ENCODE measurements at regions of chrX and their contacts with region 1.

Region 1: DNA sequence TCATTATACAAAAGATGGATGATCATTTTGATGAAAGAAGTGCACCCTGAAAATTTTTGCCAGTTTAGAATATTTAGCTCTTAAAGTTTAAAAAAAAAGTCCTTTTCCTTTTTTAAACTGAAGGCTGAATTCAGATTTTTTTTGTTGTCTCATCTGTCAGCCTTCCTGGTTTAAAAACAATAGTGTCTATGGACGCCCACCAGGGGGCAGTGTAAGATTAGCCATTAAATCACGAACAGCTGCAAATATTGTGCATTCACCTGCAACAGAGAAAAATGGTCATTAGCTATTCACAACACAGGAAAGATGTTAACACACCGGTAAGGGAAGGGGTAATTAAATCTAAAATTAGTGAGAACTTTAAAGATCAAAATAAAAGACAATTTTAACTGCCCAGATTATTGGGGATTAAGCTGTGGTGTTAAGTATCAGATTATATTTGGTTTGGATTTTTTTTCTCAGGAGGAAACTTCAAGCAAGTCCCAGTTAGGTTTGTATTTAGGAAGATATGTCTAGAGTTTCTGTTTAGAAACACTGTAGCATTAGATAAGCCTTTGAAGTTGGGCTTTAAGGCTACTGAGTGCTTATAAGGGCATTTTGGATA is 4.4 kb upstream of the CXorf38 start:
- H3K4me3 ChIP-seq: no peak overlapping the region
- H3K27ac ChIP-seq: no peak overlapping the region
- H3K4me1 ChIP-seq: peaks cover 4% of the 10 kb centered on the region; the same call in 1 of the 2 replicates
- CTCF ChIP-seq: no peak

Region 2: DNA sequence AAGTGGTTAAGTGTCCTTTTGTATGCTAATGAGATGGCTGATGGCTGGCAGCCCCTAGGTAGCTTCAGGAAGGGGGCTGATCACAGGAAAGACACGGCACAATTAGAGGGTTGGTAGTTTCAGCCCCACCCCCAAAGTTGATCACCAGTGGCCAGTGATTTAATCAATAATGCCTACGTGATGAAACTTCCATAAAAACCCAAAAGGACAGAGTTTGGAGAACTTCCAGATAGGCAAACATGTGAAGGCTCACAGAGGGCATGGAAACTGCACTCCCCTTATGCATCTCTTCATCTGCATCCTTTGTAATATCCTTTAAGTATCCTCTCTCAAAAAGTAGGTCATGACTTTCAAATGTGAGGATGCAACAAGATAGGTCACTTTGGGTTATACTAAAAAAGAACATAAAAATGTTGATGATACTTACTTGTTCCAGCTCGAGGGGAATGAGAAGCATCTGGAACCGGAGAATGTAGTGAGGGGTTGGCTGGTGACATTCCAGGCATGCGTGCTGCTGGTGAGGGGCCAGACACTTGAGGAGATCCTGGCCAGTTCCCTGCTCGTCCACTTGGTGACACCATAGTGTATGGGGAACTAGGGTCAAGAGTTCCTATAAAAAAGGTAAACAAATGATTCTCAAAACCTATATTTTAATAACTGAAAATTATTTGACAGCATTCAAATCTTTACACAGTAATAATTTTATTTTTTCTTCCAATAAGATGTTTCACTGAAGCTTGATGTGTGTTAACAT is 12.3 kb after region 1 on chrX:
- CTCF ChIA-PET with region 1: interaction called, 54 read pairs
- POLR2A ChIA-PET with region 1: no interaction called
- H3K4me3 ChIP-seq: no peak overlapping the region
- H3K27ac ChIP-seq: no peak overlapping the region
- H3K4me1 ChIP-seq: no peaks in the 10 kb centered on the region
- CTCF ChIP-seq: no peak

Region 3: DNA sequence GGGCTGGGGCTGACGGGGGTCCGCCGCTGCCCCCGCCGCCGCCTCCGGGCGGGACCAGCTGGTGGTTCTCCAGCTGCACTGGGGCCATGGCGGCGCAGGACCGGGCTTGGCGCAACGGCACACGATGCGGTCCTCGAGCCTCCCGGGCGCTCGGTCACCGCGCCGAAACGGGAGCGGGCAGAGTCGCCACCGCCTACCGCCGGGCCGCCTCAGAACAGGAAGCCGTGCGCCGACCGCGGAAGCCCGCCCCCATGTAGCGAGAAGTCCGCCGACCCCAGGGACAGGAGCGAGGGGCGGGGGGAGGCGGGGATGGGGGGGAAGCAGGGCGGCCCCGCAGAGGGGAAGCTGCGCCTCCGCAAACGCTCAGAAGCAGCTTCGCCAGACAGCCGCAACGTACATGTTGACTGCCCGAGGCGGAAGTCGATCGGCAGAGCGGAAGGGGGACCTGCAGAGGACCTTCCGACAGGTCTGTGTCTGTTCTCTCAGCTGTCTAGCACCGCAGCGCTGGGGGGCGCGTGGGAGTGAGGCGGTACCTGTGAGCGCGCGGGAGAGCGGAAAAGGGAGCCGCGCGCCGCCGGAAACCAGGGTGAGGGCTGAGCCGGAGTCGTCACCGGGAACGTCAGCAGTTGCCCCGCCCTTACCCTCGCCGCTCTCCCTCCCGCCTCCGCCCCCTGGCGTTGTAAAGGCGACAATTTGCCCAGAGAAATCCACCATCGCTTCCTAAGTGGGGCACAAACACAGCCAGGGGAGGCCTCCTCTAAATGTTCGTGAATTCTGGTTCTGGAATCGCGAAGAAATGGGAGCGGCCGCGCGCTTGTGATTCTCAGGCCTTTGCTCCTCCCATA is 83.8 kb after region 1 on chrX and contains the start of gene MED14:
- CTCF ChIA-PET with region 1: interaction called, 16 read pairs
- POLR2A ChIA-PET with region 1: interaction called, 4 read pairs
- H3K4me3 ChIP-seq: peak within 1 kb of the TSS; percentile 98
- H3K27ac ChIP-seq: peak within 1 kb of the TSS; percentile 98
- H3K4me1 ChIP-seq: peaks cover 32% of the 10 kb centered on the region
- CTCF ChIP-seq: peak; percentile 93

Region 4: DNA sequence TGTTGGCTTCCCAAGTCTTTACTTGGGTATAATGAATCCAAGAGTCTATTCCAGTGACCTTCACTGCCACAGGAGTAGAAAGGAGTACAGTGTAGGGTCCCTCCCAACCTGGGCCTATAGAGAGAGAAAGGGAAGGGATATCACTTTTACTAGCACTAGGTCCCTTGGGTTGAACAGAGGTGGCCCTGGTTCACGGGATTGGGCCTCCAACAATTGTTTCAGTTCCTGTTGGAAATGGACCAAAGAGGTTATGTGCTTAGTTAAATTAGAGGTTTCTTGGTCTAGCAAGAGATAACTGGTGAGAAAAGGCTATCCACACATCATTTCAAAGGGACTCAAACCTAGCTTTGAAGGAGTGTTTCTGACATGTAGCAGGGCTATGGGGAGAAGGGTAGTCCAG is 140.7 kb after region 1 on chrX:
- CTCF ChIA-PET with region 1: interaction called, 76 read pairs
- POLR2A ChIA-PET with region 1: interaction called, 5 read pairs
- H3K4me3 ChIP-seq: no peak overlapping the region
- H3K27ac ChIP-seq: no peak overlapping the region
- H3K4me1 ChIP-seq: peaks cover 2% of the 10 kb centered on the region; the same call in 1 of the 2 replicates
- CTCF ChIP-seq: no peak

Region 5: GRCh38 chrX:41137589-41137988 is 485.9 kb after region 1 on chrX:
- CTCF ChIA-PET with region 1: interaction called, 19 read pairs
- POLR2A ChIA-PET with region 1: no interaction called
- H3K4me3 ChIP-seq: no peak overlapping the region
- H3K27ac ChIP-seq: no peak overlapping the region
- H3K4me1 ChIP-seq: 0 out of 2 replicates have a peak, but pooled peaks cover 3% of the 10 kb centered on the region
- CTCF ChIP-seq: no peak

Measured in HEK293 (cell line).